Activated CD4-positive, alpha-beta T cell treated with anti-CD3 and anti-CD28 coated beads for 36 hours (primary cell): ENCODE measurements at regions of chr1 and their contacts with region 1.

Region 1: DNA sequence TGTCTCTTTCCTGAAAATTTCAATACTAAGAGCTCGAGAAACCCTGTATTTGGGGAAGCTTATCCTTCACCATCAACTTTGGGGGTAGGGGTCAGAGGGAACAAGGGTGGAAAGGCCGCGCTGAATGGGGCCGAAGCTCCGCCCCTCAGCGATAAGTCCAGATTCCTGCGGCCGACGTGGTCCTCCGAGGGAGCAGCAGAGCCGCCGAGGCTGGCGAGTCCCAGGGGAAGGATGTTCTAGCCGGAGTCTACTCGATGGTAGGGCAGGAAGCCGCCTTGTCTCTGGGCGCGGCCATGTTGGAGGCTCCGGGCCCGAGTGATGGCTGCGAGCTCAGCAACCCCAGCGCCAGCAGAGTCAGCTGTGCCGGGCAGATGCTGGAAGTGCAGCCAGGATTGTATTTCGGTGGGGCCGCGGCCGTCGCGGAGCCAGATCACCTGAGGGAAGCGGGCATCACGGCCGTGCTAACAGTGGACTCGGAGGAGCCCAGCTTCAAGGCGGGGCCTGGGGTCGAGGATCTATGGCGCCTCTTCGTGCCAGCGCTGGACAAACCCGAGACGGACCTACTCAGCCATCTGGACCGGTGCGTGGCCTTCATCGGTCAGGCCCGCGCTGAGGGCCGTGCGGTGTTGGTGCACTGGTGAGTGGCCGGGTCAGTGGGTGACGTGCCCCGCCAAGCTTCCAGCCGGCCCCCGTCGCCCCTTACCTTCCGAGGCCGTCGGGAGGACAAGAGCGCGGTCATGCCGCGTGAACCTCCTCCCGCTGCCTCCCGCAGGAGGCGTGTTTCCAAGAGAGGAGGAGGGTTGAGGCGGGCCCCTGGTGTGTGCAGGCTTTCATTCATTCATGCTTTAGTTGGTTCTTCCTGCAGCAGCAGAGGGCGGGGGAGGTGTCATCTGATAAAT is at the start of gene DUSP12:
- DNase-seq: peak; percentile 94
- ATAC-seq: peak; percentile 97
- H3K4me3 Mint-ChIP-seq: peak within 1 kb of the TSS; percentile 99
- H3K27ac Mint-ChIP-seq: peak within 1 kb of the TSS; percentile 99
- H3K4me1 Mint-ChIP-seq: peaks cover 43% of the 10 kb centered on the region
- H3K27me3 Mint-ChIP-seq: peaks cover 8% of the 10 kb centered on the region
- total RNA-seq, gene DUSP12: 28.0 to 28.1 TPM

Region 2: DNA sequence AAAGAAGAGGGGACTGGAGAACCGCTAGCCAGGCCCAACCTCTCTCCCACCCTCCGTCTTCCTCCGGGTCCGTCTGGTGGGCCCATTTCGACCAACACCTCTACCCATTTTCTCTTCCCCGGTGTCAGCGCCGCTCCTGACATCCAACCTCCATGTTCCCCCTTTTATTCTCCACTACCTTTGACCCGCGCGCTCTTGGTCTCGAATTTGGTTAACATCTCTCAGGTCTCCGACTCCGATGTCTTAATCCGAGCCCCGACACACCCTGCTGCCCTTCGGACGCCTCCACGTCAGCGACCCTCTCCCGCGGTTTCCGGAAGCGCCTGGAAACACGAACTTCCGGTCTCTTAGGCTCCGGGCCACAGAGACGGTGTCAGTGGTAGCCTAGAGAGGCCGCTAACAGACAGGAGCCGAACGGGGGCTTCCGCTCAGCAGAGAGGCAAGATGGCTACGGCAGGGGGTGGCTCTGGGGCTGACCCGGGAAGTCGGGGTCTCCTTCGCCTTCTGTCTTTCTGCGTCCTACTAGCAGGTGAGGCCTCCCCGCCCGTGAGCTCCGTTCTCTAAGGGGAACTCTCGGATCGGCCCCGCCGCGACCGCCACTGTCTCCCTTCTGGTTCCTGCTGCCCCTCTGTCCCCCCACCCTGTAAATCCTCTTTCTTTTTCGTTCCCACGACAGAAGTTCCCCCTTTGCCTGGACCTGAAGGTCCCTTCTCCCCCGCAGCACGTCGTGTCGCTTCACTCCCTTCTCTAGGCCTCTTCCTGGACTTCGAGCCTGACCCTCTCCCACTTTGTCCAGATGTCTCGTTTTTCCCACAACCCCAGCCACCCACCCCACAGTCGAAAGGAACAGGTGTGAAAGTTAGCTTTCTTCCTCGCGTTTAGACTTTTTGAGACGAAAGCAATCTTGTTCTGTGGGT is 1406.5 kb before region 1 on chr1 and contains the starts of genes COPA and NCSTN:
- CTCF ChIA-PET with region 1: no interaction called
- POLR2A ChIA-PET with region 1: no interaction called
- intact Hi-C with region 1: loop called in 1 of 2 experiments (anchors 5 kb)
- DNase-seq: peak; percentile 94
- ATAC-seq: peak; percentile 99
- H3K4me3 Mint-ChIP-seq: peak within 1 kb of the TSS; percentile 100
- H3K27ac Mint-ChIP-seq: peak within 1 kb of the TSS; percentile 100
- H3K4me1 Mint-ChIP-seq: peaks cover 31% of the 10 kb centered on the region
- H3K27me3 Mint-ChIP-seq: no peaks in the 10 kb centered on the region
- total RNA-seq, gene COPA: 125 to 148 TPM
- total RNA-seq, gene NCSTN: 47.0 to 51.5 TPM

Region 3: GRCh38 chr1:161549652-161550051 is 200.1 kb before region 1 on chr1 and contains the start of gene FCGR3A:
- CTCF ChIA-PET with region 1: no interaction called
- POLR2A ChIA-PET with region 1: no interaction called
- intact Hi-C with region 1: loop called in 1 of 2 experiments (anchors 10 kb)
- DNase-seq: no peak
- ATAC-seq: no peak
- H3K4me3 Mint-ChIP-seq: no peak within 1 kb of the TSS
- H3K27ac Mint-ChIP-seq: no peak within 1 kb of the TSS
- H3K4me1 Mint-ChIP-seq: peaks cover 8% of the 10 kb centered on the region
- H3K27me3 Mint-ChIP-seq: no peaks in the 10 kb centered on the region
- total RNA-seq, gene FCGR3A: not detected

Region 4: GRCh38 chr1:161631076-161631475 is 118.7 kb before region 1 on chr1 and contains the start of gene FCGR3B:
- CTCF ChIA-PET with region 1: no interaction called
- POLR2A ChIA-PET with region 1: no interaction called
- intact Hi-C with region 1: loop called in 1 of 2 experiments (anchors 10 kb)
- DNase-seq: no peak
- ATAC-seq: no peak
- H3K4me3 Mint-ChIP-seq: no peak within 1 kb of the TSS
- H3K27ac Mint-ChIP-seq: no peak within 1 kb of the TSS
- H3K4me1 Mint-ChIP-seq: peaks cover 5% of the 10 kb centered on the region
- H3K27me3 Mint-ChIP-seq: no peaks in the 10 kb centered on the region
- total RNA-seq, gene FCGR3B: not detected

Region 5: GRCh38 chr1:161726596-161727457 is 22.9 kb before region 1 on chr1:
- CTCF ChIA-PET with region 1: interaction called, 7 read pairs
- POLR2A ChIA-PET with region 1: interaction called, 3 read pairs
- intact Hi-C with region 1: loop called (anchors 1 to 2 kb)
- DNase-seq: peak; percentile 72
- ATAC-seq: peak; percentile 51
- H3K4me3 Mint-ChIP-seq: peak overlapping the region; percentile 73
- H3K27ac Mint-ChIP-seq: no peak overlapping the region
- H3K4me1 Mint-ChIP-seq: peaks cover 47% of the 10 kb centered on the region
- H3K27me3 Mint-ChIP-seq: peaks cover 44% of the 10 kb centered on the region